ENCODE measurements at regions of chr4 and their contacts with region 1.

Region 1: GRCh38 chr4:147173797-147174432 is 228.3 kb upstream of the TTC29 start:
- DNase-seq: no peak
- ATAC-seq: no peak
- H3K4me3 ChIP-seq: no peak overlapping the region
- H3K27ac ChIP-seq: no peak overlapping the region
- H3K4me1 ChIP-seq: no peaks in the 10 kb centered on the region
- H3K27me3 ChIP-seq: no peaks in the 10 kb centered on the region
- CTCF ChIP-seq: no peak
- EP300 ChIP-seq: no peak
- POLR2A ChIP-seq: no peak
- RAD21 ChIP-seq: no peak

Region 2: GRCh38 chr4:147207911-147208310 is 34.0 kb after region 1 on chr4:
- CTCF ChIA-PET with region 1: no interaction called
- POLR2A ChIA-PET with region 1: no interaction called
- in situ Hi-C with region 1: no loop called
- intact Hi-C with region 1: no loop called
- DNase-seq: no peak
- ATAC-seq: no peak
- H3K4me3 ChIP-seq: no peak overlapping the region
- H3K27ac ChIP-seq: no peak overlapping the region
- H3K4me1 ChIP-seq: no peaks in the 10 kb centered on the region
- H3K27me3 ChIP-seq: no peaks in the 10 kb centered on the region
- CTCF ChIP-seq: no peak
- EP300 ChIP-seq: no peak
- POLR2A ChIP-seq: no peak
- RAD21 ChIP-seq: no peak

Region 3: DNA sequence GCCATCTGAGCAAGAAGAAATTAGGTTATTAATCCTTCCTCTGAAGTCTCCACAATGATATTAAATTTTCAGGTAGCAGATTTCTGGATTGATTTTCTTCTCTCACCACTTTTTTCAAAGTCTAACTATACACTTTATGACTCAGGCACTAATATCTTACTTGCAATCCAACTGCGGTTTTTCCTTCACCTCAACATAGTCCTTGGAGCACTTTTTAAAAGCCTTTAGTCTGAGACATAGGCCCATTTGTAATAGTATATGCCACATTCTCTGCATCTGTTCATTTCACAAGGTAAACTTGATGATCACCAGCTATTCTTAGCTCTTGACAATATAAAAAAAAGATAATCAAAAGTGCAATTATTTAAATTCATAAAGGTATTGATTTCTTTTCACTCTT is 251.1 kb after region 1 on chr4:
- CTCF ChIA-PET with region 1: no interaction called
- POLR2A ChIA-PET with region 1: no interaction called
- in situ Hi-C with region 1: no loop called
- intact Hi-C with region 1: no loop called
- DNase-seq: no peak
- ATAC-seq: no peak
- H3K4me3 ChIP-seq: no peak overlapping the region
- H3K27ac ChIP-seq: no peak overlapping the region
- H3K4me1 ChIP-seq: no peaks in the 10 kb centered on the region
- H3K27me3 ChIP-seq: no peaks in the 10 kb centered on the region
- CTCF ChIP-seq: no peak
- EP300 ChIP-seq: no peak
- POLR2A ChIP-seq: no peak
- RAD21 ChIP-seq: no peak

Region 4: DNA sequence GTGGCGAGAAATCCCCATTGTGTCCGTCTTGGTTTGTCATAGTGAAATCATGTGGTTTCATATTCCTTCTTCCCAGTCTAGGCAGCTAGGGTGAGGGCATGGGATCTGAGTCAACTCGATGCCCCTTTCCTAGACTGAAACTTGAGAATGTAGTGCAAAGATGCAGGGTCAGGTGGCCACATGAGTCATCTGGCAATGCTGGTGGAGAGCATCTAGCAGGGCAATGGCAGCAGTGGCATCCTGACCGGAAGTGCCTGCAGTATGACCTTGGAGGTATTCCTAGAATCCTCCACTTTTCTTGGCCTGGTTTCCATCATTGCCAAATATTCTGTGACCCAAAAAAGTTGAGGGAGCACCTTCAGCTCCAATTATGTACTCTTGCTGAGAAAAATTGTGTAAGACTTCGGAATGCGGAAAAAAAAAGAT is 404.1 kb after region 1 on chr4:
- CTCF ChIA-PET with region 1: no interaction called
- POLR2A ChIA-PET with region 1: no interaction called
- in situ Hi-C with region 1: no loop called
- intact Hi-C with region 1: loop called (anchors 5 kb)
- DNase-seq: no peak
- ATAC-seq: no peak
- H3K4me3 ChIP-seq: no peak overlapping the region
- H3K27ac ChIP-seq: no peak overlapping the region
- H3K4me1 ChIP-seq: peaks cover 0 to 2% of the 10 kb centered on the region in 2 experiments; a peak in 2 of 5 replicates
- H3K27me3 ChIP-seq: peaks cover 0 to 2% of the 10 kb centered on the region in 2 experiments; a peak in 1 of 5 replicates
- CTCF ChIP-seq: no peak
- EP300 ChIP-seq: no peak
- POLR2A ChIP-seq: no peak
- RAD21 ChIP-seq: no peak